ENCODE measurements at regions of chr10 and their contacts with region 1.

Region 1: DNA sequence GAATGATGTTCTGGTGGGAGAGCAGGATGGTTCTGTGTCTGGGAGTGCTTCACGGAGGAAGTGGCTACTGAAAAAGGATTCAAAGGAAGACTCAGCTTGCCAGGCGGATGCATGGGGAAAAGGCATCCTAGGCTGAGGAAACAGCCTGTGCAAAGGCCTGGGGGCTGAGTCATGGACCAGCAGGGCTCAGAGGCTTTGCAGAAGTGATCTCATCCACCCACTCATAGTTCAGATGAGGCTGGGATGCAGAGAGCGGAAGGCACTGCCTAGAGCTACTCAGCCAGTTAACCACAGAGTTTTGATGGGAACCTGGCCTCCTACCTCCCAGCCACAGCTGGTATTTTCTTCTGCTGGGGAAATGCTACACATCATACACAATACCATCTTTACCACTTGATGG is 15.8 kb upstream of the ADAMTS14 start:
- DNase-seq: no peak
- H3K4me3 Mint-ChIP-seq: peak overlapping the region; percentile 19
- H3K27ac Mint-ChIP-seq: peak overlapping the region; percentile 16
- H3K4me1 Mint-ChIP-seq: peaks cover 21% of the 10 kb centered on the region
- H3K27me3 Mint-ChIP-seq: peaks cover 11% of the 10 kb centered on the region

Region 2: GRCh38 chr10:70619271-70620019 is 37.0 kb before region 1 on chr10:
- intact Hi-C with region 1: loop called (anchors 2 kb)
- DNase-seq: no peak
- H3K4me3 Mint-ChIP-seq: no peak overlapping the region
- H3K27ac Mint-ChIP-seq: no peak overlapping the region
- H3K4me1 Mint-ChIP-seq: peaks cover 31% of the 10 kb centered on the region
- H3K27me3 Mint-ChIP-seq: no peaks in the 10 kb centered on the region

Region 3: GRCh38 chr10:70925377-70926225 is 269.1 kb after region 1 on chr10:
- intact Hi-C with region 1: no loop called
- DNase-seq: peak; percentile 32
- H3K4me3 Mint-ChIP-seq: no peak overlapping the region
- H3K27ac Mint-ChIP-seq: no peak overlapping the region
- H3K4me1 Mint-ChIP-seq: peaks cover 3% of the 10 kb centered on the region
- H3K27me3 Mint-ChIP-seq: peaks cover 5% of the 10 kb centered on the region